Activated CD4-positive, alpha-beta T cell treated with anti-CD3 and anti-CD28 coated beads, Interleukin-2, amount 10 ng/mL, durations not matched to agents 24 days and 14 days (primary cell): ENCODE measurements at regions of chrX and their contacts with region 1.

Region 1: GRCh38 chrX:19682712-19683331 is 167.5 kb upstream of the MAP3K15 start:
- DNase-seq: peak; percentile 93
- H3K4me3 Mint-ChIP-seq: peak overlapping the region; percentile 76
- H3K27ac Mint-ChIP-seq: peak overlapping the region; percentile 90
- H3K4me1 Mint-ChIP-seq: peaks cover 65% of the 10 kb centered on the region
- H3K27me3 Mint-ChIP-seq: no peaks in the 10 kb centered on the region

Region 2: DNA sequence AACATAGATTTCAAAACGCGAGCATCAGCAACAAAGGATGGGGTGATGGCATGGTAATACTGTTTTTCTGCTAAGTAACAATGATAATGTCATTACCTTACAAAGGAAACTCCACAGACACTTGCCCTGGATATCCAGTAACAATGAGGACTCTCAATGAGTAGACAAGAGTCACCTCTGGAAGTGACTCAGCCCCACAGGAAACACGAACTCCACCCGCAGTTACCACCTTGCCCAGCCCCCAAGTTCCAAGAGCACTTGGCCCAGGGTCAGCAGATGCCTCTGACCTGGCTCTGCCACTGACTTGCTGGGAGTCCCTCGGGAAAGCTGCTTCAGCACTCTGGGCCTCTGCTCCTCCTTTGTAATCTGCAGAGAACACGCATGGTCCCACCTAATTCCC is 57.2 kb before region 1 on chrX:
- intact Hi-C with region 1: loop called (anchors 1 kb)
- DNase-seq: peak; percentile 82
- H3K4me3 Mint-ChIP-seq: peak overlapping the region; percentile 64
- H3K27ac Mint-ChIP-seq: peak overlapping the region; percentile 85
- H3K4me1 Mint-ChIP-seq: peaks cover 48% of the 10 kb centered on the region
- H3K27me3 Mint-ChIP-seq: no peaks in the 10 kb centered on the region

Region 3: GRCh38 chrX:19725641-19726040 is 42.8 kb after region 1 on chrX:
- intact Hi-C with region 1: loop called (anchors 5 kb)
- DNase-seq: peak; percentile 65
- H3K4me3 Mint-ChIP-seq: peak overlapping the region; percentile 9
- H3K27ac Mint-ChIP-seq: peak overlapping the region; percentile 87
- H3K4me1 Mint-ChIP-seq: peaks cover 44% of the 10 kb centered on the region
- H3K27me3 Mint-ChIP-seq: no peaks in the 10 kb centered on the region

Region 4: GRCh38 chrX:19799319-19800182 is 116.7 kb after region 1 on chrX:
- intact Hi-C with region 1: loop called (anchors 5 kb)
- DNase-seq: peak; percentile 80
- H3K4me3 Mint-ChIP-seq: peak overlapping the region; percentile 85
- H3K27ac Mint-ChIP-seq: peak overlapping the region; percentile 94
- H3K4me1 Mint-ChIP-seq: peaks cover 60% of the 10 kb centered on the region
- H3K27me3 Mint-ChIP-seq: no peaks in the 10 kb centered on the region

Region 5: GRCh38 chrX:19887911-19888879 is 205.4 kb after region 1 on chrX:
- intact Hi-C with region 1: loop called (anchors 1 kb)
- DNase-seq: peak; percentile 82
- H3K4me3 Mint-ChIP-seq: peak overlapping the region; percentile 82
- H3K27ac Mint-ChIP-seq: peak overlapping the region; percentile 82
- H3K4me1 Mint-ChIP-seq: peaks cover 27% of the 10 kb centered on the region
- H3K27me3 Mint-ChIP-seq: no peaks in the 10 kb centered on the region